Astrocyte of the cerebellum (primary cell): ENCODE measurements at regions of chr7 and their contacts with region 1.

Region 1: GRCh38 chr7:103307503-103308231 is 10.4 kb downstream of the PMPCB start:
- DNase-seq: no peak
- H3K4me3 ChIP-seq: no peak overlapping the region
- CTCF ChIP-seq: no peak

Region 2: DNA sequence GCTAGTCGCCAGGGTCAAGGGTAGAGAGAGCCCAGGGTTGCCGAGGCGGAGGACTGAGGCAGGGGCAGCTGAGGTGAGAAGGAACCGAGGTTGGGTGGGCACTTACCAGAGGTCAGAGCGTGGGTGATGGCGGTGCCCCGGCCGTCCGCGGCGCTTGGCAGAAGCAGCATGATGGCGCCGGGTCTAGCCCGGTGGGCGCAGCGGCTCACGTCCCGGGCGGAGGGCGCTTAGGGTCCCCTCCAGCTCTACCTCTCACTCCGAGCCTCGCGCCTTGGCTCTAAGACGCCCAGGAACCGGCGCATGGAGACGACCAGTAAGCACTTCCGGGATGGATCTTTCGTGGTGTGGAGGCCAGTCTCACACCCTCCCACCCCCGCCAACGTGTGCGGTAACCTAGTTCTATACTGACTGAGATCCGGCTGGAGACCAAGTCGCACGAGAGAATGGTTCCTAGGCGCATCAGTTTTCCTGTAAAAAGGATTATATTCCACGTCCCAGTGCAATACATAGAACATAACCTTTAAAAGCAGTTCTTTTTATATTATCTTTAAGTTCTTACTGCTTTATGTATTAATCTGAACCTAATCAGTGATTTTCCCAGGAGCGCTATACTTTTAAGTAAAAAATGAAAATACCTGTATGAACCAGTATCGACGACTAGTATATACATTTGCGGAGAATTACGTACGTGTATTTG is 36.9 kb after region 1 on chr7 and contains the start of gene DNAJC2:
- in situ Hi-C with region 1: loop called (anchors 5 kb)
- DNase-seq: peak; percentile 86
- H3K4me3 ChIP-seq: peak within 1 kb of the TSS; percentile 81
- CTCF ChIP-seq: no peak